Heart right ventricle (tissue), 16 donors: ENCODE measurements at regions of chr12 and their contacts with region 1.

Region 1: GRCh38 chr12:100266835-100267618 is at the starts of genes DEPDC4 and SCYL2:
- DNase-seq: peak; percentile 94 to 95
- ATAC-seq: peak; percentile 96 to 99 (median 98)
- H3K4me3 ChIP-seq: peak within 1 kb of the TSS; percentile 69 to 97 (median 88)
- H3K27ac ChIP-seq: peak within 1 kb of the TSS; percentile 75 to 99 (median 96)
- H3K4me1 ChIP-seq: peaks cover 2 to 48% (median 36%) of the 10 kb centered on the region in 9 donors
- H3K27me3 ChIP-seq: no peaks in the 10 kb centered on the region
- CTCF ChIP-seq: peak in 3 of 9 donors; percentile 22 to 39 (median 38)
- total RNA-seq, gene DEPDC4: 0.47 to 2.0 (median 0.72) TPM
- total RNA-seq, gene SCYL2: 25.8 to 40.0 (median 32.9) TPM

Region 2: DNA sequence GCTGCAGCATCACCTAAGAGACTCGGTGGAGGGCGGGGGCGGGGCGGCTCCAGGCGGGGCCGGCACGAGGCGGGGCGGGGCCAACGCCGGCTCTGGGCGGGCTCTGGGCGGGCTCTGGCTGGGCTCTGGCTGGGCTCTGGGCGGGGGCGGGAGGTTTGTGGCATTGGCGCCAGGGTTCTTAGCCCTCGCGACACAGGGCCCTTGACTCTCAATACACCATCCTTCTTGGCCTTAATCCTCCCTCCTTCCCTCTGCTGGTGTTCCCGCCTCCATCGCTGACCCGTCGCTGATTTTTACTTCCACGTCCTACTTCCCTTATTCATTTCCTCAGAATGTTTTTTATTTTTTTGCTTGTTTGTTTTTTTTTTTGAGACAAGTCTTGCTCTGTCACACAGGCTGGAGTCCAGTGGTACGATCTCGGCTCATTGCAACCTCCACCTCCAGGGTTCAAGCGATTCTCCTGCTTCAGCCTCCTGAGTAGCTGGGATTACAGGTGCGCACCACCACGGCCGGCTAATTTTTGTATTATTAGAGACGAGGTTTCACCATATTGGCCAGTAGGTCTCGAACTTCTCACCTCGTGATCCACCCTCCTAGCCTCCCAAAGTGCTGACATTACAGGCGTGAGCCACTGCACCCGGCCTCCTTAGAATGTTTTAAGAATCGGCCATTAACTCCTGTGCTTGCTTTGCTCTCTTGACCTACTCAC is 124.0 kb before region 1 on chr12 and contains the start of gene BLTP3B:
- intact Hi-C with region 1: loop called in 2 of 10 experiments (anchors 2 to 10 kb)
- DNase-seq: peak; percentile 93 to 94
- ATAC-seq: peak; percentile 98 to 100 (median 98)
- H3K4me3 ChIP-seq: peak within 1 kb of the TSS; percentile 73 to 98 (median 97)
- H3K27ac ChIP-seq: peak within 1 kb of the TSS; percentile 83 to 99 (median 97)
- H3K4me1 ChIP-seq: peaks cover 2 to 46% (median 26%) of the 10 kb centered on the region in 9 donors
- H3K27me3 ChIP-seq: no peaks in the 10 kb centered on the region
- CTCF ChIP-seq: no peak
- total RNA-seq, gene BLTP3B: 12.2 to 18.0 (median 15.2) TPM

Region 3: DNA sequence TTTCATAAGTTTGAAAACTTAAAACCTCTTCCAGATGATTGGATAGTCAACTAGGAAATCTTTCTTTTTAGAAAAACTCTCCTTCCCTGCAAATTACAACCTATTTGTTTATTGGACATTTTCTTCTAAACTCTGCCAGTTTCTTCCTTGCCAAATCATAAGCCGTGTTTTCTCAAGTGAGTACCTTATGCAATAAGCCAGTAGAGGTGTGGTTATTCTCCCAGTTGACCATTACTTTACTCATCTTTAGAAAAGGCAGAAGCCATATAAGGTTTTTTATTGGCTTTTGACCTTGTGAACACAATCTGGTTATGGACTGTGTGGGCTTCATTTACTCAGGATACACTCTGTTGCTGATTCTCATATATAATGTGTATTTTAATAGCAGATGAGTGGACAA is 51.8 kb before region 1 on chr12:
- intact Hi-C with region 1: no loop called
- DNase-seq: no peak
- ATAC-seq: no peak
- H3K4me3 ChIP-seq: no peak overlapping the region
- H3K27ac ChIP-seq: peak overlapping the region in 1 of 10 donors; percentile 8
- H3K4me1 ChIP-seq: no peaks in the 10 kb centered on the region
- H3K27me3 ChIP-seq: no peaks in the 10 kb centered on the region
- CTCF ChIP-seq: no peak

Region 4: GRCh38 chr12:100573292-100574186 is 306.5 kb after region 1 on chr12 and contains the start of gene GAS2L3:
- intact Hi-C with region 1: loop called in 1 of 10 experiments (anchors 10 kb)
- DNase-seq: peak; percentile 87 to 91
- ATAC-seq: peak; percentile 99 to 100 (median 100)
- H3K4me3 ChIP-seq: peak within 1 kb of the TSS; percentile 55 to 79 (median 65)
- H3K27ac ChIP-seq: peak within 1 kb of the TSS in 9 of 10 donors; percentile 41 to 88 (median 70)
- H3K4me1 ChIP-seq: peaks cover 0 to 31% (median 17%) of the 10 kb centered on the region in 9 donors
- H3K27me3 ChIP-seq: peaks cover 0 to 5% (median 0%) of the 10 kb centered on the region in 7 donors
- CTCF ChIP-seq: no peak
- total RNA-seq, gene GAS2L3: 1.3 to 5.6 (median 2.0) TPM